ENCODE measurements at regions of chr11 and their contacts with region 1.

Region 1: GRCh38 chr11:3947061-3947460 is 91.6 kb downstream of the STIM1 start:
- DNase-seq: no peak
- ATAC-seq: peak; percentile 90

Region 2: DNA sequence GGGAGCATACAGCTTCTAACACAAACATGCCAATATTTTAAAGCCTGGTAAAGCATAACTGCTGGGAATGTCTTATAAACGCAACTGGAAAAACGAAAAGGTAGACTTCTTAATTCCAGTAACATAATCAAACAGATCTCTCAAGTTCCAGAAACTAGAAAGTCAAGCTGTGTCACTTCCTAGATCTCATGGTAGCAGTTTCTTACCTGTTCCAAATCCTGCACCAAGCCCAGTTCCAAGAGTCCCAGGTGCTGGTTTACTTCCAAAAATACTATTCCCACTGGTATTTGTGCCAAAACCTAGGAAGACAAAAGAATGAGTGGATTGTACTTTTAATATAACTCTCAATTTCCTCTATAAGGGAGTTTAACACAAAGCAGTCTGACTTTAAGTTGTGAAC is 194.0 kb before region 1 on chr11:
- intact Hi-C with region 1: no loop called
- DNase-seq: no peak
- ATAC-seq: no peak

Region 3: DNA sequence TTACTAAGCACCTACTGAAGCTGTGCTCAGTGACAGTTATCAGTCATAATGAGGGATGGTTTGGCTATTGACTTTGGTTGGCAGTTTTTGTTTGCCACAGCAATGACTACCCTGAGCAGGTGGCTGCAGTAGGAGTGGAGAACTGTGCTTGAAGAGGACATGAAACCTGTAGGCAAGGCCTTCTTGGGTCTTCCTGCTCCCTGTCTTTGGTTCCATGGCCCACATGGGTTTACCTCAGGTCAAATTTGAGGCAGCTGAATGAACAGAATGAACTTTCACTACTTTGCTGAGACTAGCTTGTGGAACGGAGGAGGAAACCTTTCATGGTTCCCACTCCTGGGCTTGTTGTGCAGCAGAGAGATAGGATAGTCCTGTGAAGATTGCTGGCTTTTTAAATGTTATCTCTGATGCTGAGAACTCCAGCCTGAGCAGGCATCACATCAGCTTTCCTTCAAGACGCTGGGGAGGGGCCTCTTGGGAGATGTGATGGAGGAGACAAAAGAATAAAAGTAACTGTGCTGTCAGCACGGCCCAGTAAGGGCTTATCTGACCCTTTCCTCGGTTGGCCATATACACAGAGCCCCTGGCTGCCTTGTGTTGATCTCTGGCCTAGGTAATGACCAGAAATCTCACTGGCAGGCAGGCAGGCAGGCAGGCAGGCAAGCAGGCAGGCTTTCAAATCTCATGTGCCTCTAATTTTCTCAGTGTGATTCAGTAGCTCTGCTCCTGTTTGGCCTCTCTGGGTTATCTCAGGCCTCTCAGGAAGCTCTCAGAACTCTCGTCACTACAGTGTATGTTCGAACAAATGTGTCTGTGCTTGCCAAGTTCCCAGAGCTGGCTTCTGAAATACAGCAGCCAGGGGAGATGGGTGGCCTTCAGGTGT is 79.6 kb before region 1 on chr11:
- intact Hi-C with region 1: loop called (anchors 5 kb)
- DNase-seq: no peak
- ATAC-seq: peak; percentile 93

Region 4: GRCh38 chr11:3905080-3905953 is 41.7 kb before region 1 on chr11:
- intact Hi-C with region 1: loop called (anchors 5 kb)
- DNase-seq: no peak
- ATAC-seq: peak; percentile 18

Region 5: GRCh38 chr11:4044976-4045646 is 98.0 kb after region 1 on chr11:
- intact Hi-C with region 1: loop called (anchors 5 kb)
- DNase-seq: no peak
- ATAC-seq: peak; percentile 51